HepG2 (cell line): ENCODE measurements at regions of chr19 and their contacts with region 1.

Region 1: DNA sequence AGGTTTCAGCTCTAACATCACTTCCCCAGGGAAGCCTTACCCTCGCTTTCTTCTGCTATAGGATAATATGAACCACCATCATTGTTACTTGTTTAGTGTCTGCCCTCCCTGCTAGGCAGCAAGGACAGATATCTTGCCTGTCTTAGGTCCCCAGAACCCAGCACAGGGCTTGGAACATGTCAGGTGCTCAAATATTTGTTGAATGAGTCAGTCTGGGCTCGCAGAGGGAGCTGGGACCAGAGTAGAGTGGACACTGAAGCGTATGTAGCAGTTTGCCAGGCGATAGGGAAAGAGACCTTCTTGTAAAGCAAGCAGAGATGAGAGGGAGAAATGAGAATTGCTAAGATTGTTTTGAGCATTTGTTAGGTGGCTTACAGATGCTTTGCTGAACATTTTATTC is 11.7 kb downstream of the BCKDHA start:
- DNase-seq: peak; percentile 92
- ATAC-seq: peak; percentile 97
- H3K4me3 ChIP-seq: peak overlapping the region in 2 of 3 experiments; percentile 15 to 35; a peak in 1 of 6 replicates
- H3K27ac ChIP-seq: peak overlapping the region; percentile 74
- H3K4me1 ChIP-seq: peaks cover 30% of the 10 kb centered on the region
- H3K27me3 ChIP-seq: no peaks in the 10 kb centered on the region
- CTCF ChIP-seq: no peak
- EP300 ChIP-seq: no peak
- POLR2A ChIP-seq: peak in 1 of 2 experiments; percentile 46; a peak in 2 of 4 replicates
- RAD21 ChIP-seq: no peak

Region 2: GRCh38 chr19:41426952-41427646 is 17.8 kb after region 1 on chr19 and contains the start of gene B3GNT8:
- CTCF ChIA-PET with region 1: no interaction called
- POLR2A ChIA-PET with region 1: interaction called, 13 read pairs
- in situ Hi-C with region 1: no loop called
- intact Hi-C with region 1: no loop called
- DNase-seq: peak; percentile 59
- ATAC-seq: peak; percentile 92
- H3K4me3 ChIP-seq: peak within 1 kb of the TSS; percentile 62 to 76 (median 64)
- H3K27ac ChIP-seq: peak within 1 kb of the TSS; percentile 48
- H3K4me1 ChIP-seq: peaks cover 52% of the 10 kb centered on the region
- H3K27me3 ChIP-seq: no peaks in the 10 kb centered on the region
- CTCF ChIP-seq: no peak
- EP300 ChIP-seq: no peak
- POLR2A ChIP-seq: peak; percentile 44 to 60; a peak in 3 of 4 replicates
- RAD21 ChIP-seq: no peak
- total RNA-seq, gene B3GNT8: 1.9 and 2.3 TPM in 2 replicates

Region 3: GRCh38 chr19:41462497-41462896 is 53.2 kb after region 1 on chr19:
- CTCF ChIA-PET with region 1: no interaction called
- POLR2A ChIA-PET with region 1: no interaction called
- in situ Hi-C with region 1: no loop called
- intact Hi-C with region 1: no loop called
- DNase-seq: no peak
- ATAC-seq: no peak
- H3K4me3 ChIP-seq: no peak overlapping the region
- H3K27ac ChIP-seq: no peak overlapping the region
- H3K4me1 ChIP-seq: peaks cover 6% of the 10 kb centered on the region; the same call in 1 of the 2 replicates
- H3K27me3 ChIP-seq: no peaks in the 10 kb centered on the region; a peak in 1 of 5 replicates
- CTCF ChIP-seq: no peak
- EP300 ChIP-seq: no peak
- POLR2A ChIP-seq: no peak
- RAD21 ChIP-seq: no peak